ENCODE measurements at regions of chrX and their contacts with region 1.

Region 1: DNA sequence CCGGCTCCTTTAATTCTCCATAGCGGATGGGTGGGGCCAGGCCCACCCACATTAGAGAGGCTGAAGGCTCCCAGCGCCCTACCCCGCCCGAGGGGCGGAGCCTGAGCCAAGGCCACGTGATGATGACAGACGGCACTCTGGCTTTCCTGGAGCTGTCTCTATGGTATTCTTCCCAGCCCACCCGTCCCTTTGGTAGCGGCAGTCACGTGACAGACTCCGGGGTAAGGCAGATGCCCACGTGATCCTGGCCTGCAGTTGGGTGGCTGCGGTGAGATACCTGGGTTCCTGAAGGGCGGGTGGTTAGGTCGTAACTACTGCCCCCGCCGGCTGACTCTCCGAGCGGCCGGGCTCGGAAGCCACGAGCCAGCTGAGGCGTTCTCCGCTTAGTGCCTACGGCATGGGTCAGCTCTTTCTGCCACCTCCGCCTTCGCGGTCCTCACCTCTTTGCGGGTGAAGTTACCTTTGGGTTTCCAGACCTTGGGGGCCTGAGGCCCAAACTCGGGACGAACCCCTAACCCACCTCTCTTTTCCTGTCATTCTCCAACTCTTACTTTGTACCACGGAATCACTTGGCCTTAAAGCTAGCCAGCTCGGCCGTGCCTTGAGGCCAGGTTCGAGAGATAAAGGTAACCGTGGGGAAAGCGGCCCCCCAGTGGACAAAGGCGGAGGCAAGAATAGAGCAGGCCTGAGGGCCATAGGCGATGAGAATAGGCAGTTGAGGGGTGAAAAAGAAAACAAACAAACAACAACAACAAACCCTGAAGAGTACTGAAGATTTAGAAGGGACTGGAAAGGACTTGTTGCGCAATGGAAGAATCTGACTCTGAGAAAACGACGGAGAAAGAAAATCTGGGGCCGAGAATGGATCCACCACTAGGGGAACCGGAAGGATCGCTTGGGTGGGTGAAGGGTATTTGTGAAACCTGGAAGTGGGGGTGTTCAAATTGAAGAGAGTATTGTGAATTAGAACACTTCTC is at the start of gene RRAGB:
- DNase-seq: peak; percentile 78 to 97 (median 88)
- ATAC-seq: peak; percentile 98
- H3K4me3 ChIP-seq: peak within 1 kb of the TSS; percentile 82
- H3K4me3 Mint-ChIP-seq: peak within 1 kb of the TSS; percentile 76
- H3K27ac ChIP-seq: peak within 1 kb of the TSS; percentile 85 to 89
- H3K27ac Mint-ChIP-seq: peak within 1 kb of the TSS; percentile 95
- H3K4me1 ChIP-seq: peaks cover 18% of the 10 kb centered on the region
- H3K4me1 Mint-ChIP-seq: peaks cover 43% of the 10 kb centered on the region
- H3K27me3 ChIP-seq: no peaks in the 10 kb centered on the region
- H3K27me3 Mint-ChIP-seq: no peaks in the 10 kb centered on the region
- CTCF ChIP-seq: peak; percentile 69
- total RNA-seq, gene RRAGB: 7.0 to 8.5 TPM

Region 2: GRCh38 chrX:54182864-54183608 is 1534.8 kb before region 1 on chrX and contains the start of gene FAM120C:
- CTCF ChIA-PET with region 1: no interaction called
- POLR2A ChIA-PET with region 1: no interaction called
- intact Hi-C with region 1: loop called in 1 of 2 experiments (anchors 10 kb)
- DNase-seq: peak; percentile 41 to 82 (median 56)
- ATAC-seq: peak; percentile 69
- H3K4me3 ChIP-seq: peak within 1 kb of the TSS; percentile 67
- H3K4me3 Mint-ChIP-seq: peak within 1 kb of the TSS; percentile 92
- H3K27ac ChIP-seq: peak within 1 kb of the TSS; percentile 69 to 75
- H3K27ac Mint-ChIP-seq: peak within 1 kb of the TSS; percentile 86
- H3K4me1 ChIP-seq: peaks cover 29% of the 10 kb centered on the region
- H3K4me1 Mint-ChIP-seq: peaks cover 42% of the 10 kb centered on the region
- H3K27me3 ChIP-seq: no peaks in the 10 kb centered on the region
- H3K27me3 Mint-ChIP-seq: no peaks in the 10 kb centered on the region
- CTCF ChIP-seq: no peak
- total RNA-seq, gene FAM120C: 12.3 to 13.3 TPM

Region 3: GRCh38 chrX:54808605-54809483 is 909.0 kb before region 1 on chrX:
- CTCF ChIA-PET with region 1: no interaction called
- POLR2A ChIA-PET with region 1: no interaction called
- intact Hi-C with region 1: loop called in 1 of 2 experiments (anchors 10 kb)
- DNase-seq: peak; percentile 75 to 97 (median 84)
- ATAC-seq: peak; percentile 70
- H3K4me3 ChIP-seq: peak overlapping the region; percentile 93
- H3K4me3 Mint-ChIP-seq: peak overlapping the region; percentile 95
- H3K27ac ChIP-seq: peak overlapping the region; percentile 65 to 88
- H3K27ac Mint-ChIP-seq: peak overlapping the region; percentile 98
- H3K4me1 ChIP-seq: peaks cover 25% of the 10 kb centered on the region
- H3K4me1 Mint-ChIP-seq: peaks cover 24% of the 10 kb centered on the region
- H3K27me3 ChIP-seq: no peaks in the 10 kb centered on the region
- H3K27me3 Mint-ChIP-seq: no peaks in the 10 kb centered on the region
- CTCF ChIP-seq: no peak

Region 4: DNA sequence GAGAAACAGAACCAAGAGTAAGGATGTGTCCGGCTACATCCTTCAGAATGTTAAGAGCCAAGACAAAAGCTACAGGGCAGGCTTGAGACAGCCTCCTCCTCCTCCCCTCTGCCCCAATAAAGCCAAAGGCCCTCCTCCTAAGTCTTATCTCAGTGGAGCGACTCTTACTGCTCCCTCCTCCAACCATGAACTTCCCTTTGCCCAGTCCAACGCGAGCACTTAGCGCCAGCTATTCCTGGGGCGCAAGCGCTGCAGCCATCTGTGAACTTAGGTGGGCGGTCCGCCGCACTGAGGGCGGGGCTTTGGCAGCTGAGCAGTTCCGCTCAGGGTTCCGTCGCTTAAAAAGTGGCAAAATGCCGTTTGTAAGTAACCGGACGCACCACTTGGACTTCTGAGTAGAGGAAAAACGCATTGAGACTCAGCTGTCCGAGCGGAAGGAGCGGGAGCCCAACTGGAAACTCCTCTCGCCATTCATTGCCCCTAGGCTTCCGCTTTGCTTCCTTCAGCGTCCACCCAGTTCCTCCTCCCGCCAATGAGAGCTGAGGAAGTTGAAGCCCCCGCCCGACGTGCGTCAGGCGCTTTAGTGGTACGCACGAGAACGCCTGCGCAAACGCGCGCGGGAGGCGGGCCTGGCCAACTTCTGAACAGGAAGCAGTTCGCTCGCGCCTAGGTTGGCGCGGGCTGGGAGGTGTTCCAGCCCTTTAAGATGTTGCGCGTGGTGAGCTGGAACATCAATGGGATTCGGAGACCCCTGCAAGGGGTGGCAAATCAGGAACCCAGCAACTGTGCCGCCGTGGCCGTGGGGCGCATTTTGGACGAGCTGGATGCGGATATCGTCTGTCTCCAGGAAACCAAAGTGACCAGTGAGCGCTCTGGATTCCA is 717.9 kb before region 1 on chrX and contains the start of gene APEX2:
- CTCF ChIA-PET with region 1: no interaction called
- POLR2A ChIA-PET with region 1: interaction called, 6 read pairs
- intact Hi-C with region 1: loop called in 1 of 2 experiments (anchors 5 kb)
- DNase-seq: peak; percentile 72 to 95 (median 84)
- ATAC-seq: peak; percentile 94
- H3K4me3 ChIP-seq: peak within 1 kb of the TSS; percentile 89
- H3K4me3 Mint-ChIP-seq: peak within 1 kb of the TSS; percentile 96
- H3K27ac ChIP-seq: peak within 1 kb of the TSS; percentile 84 to 97
- H3K27ac Mint-ChIP-seq: peak within 1 kb of the TSS; percentile 97
- H3K4me1 ChIP-seq: peaks cover 20% of the 10 kb centered on the region
- H3K4me1 Mint-ChIP-seq: peaks cover 36% of the 10 kb centered on the region
- H3K27me3 ChIP-seq: no peaks in the 10 kb centered on the region
- H3K27me3 Mint-ChIP-seq: no peaks in the 10 kb centered on the region
- CTCF ChIP-seq: no peak
- total RNA-seq, gene APEX2: 6.4 to 7.2 TPM

Region 5: GRCh38 chrX:55488593-55489313 is 229.1 kb before region 1 on chrX:
- CTCF ChIA-PET with region 1: interaction called, 5 read pairs
- POLR2A ChIA-PET with region 1: interaction called, 49 read pairs
- intact Hi-C with region 1: no loop called
- DNase-seq: peak; percentile 43 to 80 (median 59)
- ATAC-seq: peak; percentile 75
- H3K4me3 ChIP-seq: peak overlapping the region; percentile 87
- H3K4me3 Mint-ChIP-seq: peak overlapping the region; percentile 98
- H3K27ac ChIP-seq: peak overlapping the region; percentile 72 to 85
- H3K27ac Mint-ChIP-seq: peak overlapping the region; percentile 96
- H3K4me1 ChIP-seq: peaks cover 10% of the 10 kb centered on the region
- H3K4me1 Mint-ChIP-seq: peaks cover 17% of the 10 kb centered on the region
- H3K27me3 ChIP-seq: no peaks in the 10 kb centered on the region
- H3K27me3 Mint-ChIP-seq: no peaks in the 10 kb centered on the region
- CTCF ChIP-seq: no peak

Region 6: DNA sequence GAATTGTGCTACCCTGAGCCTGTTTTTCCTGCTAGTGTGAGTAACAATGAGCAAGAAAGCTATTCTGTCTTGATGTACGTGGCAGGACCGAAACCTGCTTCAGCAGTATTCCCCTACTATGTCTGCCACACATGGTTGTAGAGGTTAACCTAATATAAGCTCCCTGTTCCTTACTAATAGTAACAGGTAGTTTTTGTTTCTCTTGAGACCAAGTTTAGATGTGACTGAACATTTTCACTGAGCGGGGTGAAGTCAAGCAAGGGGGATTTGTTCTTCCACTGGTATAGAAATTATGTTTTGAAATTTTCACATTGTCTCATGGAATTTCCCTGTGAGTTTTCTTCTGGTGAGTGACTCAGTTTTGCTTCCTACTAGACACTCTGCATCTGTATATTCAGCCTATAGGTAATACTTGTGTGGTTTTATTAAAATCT is 37.1 kb after region 1 on chrX:
- CTCF ChIA-PET with region 1: no interaction called
- POLR2A ChIA-PET with region 1: no interaction called
- intact Hi-C with region 1: no loop called
- DNase-seq: no peak
- ATAC-seq: no peak
- H3K4me3 ChIP-seq: no peak overlapping the region
- H3K4me3 Mint-ChIP-seq: no peak overlapping the region
- H3K27ac ChIP-seq: no peak overlapping the region
- H3K27ac Mint-ChIP-seq: no peak overlapping the region
- H3K4me1 ChIP-seq: no peaks in the 10 kb centered on the region
- H3K4me1 Mint-ChIP-seq: no peaks in the 10 kb centered on the region
- H3K27me3 ChIP-seq: no peaks in the 10 kb centered on the region
- H3K27me3 Mint-ChIP-seq: no peaks in the 10 kb centered on the region
- CTCF ChIP-seq: no peak

Region 7: DNA sequence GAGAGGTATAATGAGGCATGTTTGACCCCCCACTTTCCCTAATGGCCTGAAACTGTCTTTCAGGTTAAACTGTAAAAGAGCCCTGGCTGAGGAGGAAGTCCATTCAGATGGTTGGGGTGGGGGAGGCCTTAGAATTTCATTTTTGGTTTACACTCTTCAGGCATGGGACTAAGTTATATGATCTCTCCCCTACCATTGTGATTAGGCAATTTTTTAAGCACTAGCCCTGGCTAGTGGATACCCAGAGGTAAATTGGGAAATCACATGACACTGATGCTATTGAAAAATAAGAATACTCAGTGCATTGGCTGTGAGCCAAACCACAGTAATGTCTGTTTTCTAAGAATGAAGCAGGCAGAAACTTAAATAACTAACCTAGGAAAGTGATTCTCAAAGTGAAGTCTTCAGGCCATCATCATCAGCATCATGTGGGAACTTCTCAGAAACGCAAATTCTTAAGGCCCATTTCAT is 149.4 kb after region 1 on chrX:
- CTCF ChIA-PET with region 1: no interaction called
- POLR2A ChIA-PET with region 1: no interaction called
- intact Hi-C with region 1: no loop called
- DNase-seq: peak in 3 of 14 experiments; percentile 12 to 27 (median 18)
- ATAC-seq: no peak
- H3K4me3 ChIP-seq: no peak overlapping the region
- H3K4me3 Mint-ChIP-seq: no peak overlapping the region
- H3K27ac ChIP-seq: no peak overlapping the region
- H3K27ac Mint-ChIP-seq: no peak overlapping the region
- H3K4me1 ChIP-seq: no peaks in the 10 kb centered on the region
- H3K4me1 Mint-ChIP-seq: peaks cover 13% of the 10 kb centered on the region
- H3K27me3 ChIP-seq: no peaks in the 10 kb centered on the region
- H3K27me3 Mint-ChIP-seq: no peaks in the 10 kb centered on the region
- CTCF ChIP-seq: no peak

Region 8: GRCh38 chrX:55907968-55908607 is 190.3 kb after region 1 on chrX:
- CTCF ChIA-PET with region 1: interaction called, 8 read pairs
- POLR2A ChIA-PET with region 1: interaction called, 12 read pairs
- intact Hi-C with region 1: loop called (anchors 1 to 5 kb)
- DNase-seq: peak in 13 of 14 experiments; percentile 6 to 63 (median 38)
- ATAC-seq: peak; percentile 69
- H3K4me3 ChIP-seq: peak overlapping the region; percentile 81
- H3K4me3 Mint-ChIP-seq: peak overlapping the region; percentile 100
- H3K27ac ChIP-seq: peak overlapping the region in 1 of 2 donors; percentile 36
- H3K27ac Mint-ChIP-seq: peak overlapping the region; percentile 86
- H3K4me1 ChIP-seq: peaks cover 12% of the 10 kb centered on the region
- H3K4me1 Mint-ChIP-seq: peaks cover 28% of the 10 kb centered on the region
- H3K27me3 ChIP-seq: no peaks in the 10 kb centered on the region
- H3K27me3 Mint-ChIP-seq: no peaks in the 10 kb centered on the region
- CTCF ChIP-seq: peak; percentile 53

Measured in CD4-positive, alpha-beta T cell (primary cell).